ENCODE measurements at regions of chr19 and their contacts with region 1.

Region 1: DNA sequence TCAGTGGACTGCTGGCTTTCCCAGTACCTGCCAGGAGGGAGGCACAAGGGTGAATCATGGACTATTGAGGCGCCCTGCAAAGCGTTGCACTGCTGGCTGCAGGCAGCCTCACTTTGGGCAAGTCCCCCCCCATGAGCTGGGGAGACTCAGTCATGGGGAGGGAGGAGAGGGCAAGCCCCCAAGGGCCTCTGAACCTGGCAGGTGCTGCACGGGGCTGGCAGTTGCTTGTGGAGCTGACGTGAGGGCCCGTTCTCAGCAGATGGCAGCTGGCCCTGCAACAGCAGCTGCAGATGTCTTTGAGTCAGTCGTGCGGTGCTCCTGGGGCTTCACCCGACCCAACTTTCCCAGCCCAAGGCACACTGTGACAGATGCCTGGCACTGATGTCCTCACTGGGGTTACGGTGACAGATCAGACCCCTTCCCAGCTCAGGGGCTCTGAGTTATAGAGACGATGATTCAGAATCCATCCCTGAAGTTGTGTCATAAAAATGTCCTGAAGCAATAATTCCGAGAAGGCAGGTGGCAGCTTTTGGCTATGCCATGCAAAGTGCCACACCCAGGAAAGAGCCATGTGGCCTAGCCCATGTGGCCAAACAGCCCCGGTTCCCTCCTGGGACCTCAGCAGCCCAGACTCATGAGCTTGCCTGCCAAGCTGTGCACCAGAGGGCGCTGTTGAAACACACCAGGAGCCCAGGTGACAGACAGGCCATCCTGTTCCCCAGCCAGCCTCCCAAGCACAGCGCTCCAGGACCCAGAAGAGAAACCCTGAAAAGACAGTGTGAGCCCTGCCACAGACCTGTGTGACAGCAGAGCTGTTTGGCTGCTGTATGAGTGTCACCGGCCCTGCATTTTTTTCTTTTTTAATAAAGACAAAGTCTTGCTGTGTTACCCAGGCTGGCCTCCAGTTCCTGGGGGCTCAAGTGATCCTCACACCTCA is 53.6 kb upstream of the LDLR start:
- DNase-seq: peak; percentile 94
- ATAC-seq: peak; percentile 87
- H3K4me3 ChIP-seq: no peak overlapping the region
- H3K4me3 Mint-ChIP-seq: peak overlapping the region; percentile 44
- H3K27ac ChIP-seq: no peak overlapping the region
- H3K27ac Mint-ChIP-seq: peak overlapping the region; percentile 88
- H3K4me1 ChIP-seq: peaks cover 11 to 26% of the 10 kb centered on the region in 2 donors
- H3K4me1 Mint-ChIP-seq: peaks cover 18% of the 10 kb centered on the region
- H3K27me3 ChIP-seq: peaks cover 0 to 14% (median 1%) of the 10 kb centered on the region in 4 experiments
- H3K27me3 Mint-ChIP-seq: peaks cover 6% of the 10 kb centered on the region
- CTCF ChIP-seq: peak; percentile 93

Region 2: DNA sequence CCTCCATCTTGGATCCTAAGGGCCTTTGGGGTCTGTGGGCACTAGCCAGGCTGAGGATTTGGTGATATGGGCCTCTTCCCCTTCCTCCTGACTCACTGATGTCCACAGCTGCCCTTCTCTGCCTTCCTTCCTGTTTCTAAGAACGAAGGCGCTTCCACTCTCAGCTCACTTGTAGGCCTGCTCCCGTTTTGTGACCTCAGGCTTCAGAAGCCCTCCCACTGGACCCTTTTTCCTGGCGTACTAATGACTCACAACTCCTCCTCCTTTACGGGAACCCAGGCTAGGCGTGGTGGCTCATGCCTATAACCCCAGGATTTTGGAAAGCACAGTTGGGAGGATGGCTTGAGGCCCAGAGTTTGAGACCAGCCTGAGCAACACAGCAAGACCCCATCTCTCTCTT is 255.3 kb before region 1 on chr19:
- CTCF ChIA-PET with region 1: no interaction called
- POLR2A ChIA-PET with region 1: no interaction called
- intact Hi-C with region 1: no loop called
- DNase-seq: no peak
- ATAC-seq: no peak
- H3K4me3 ChIP-seq: no peak overlapping the region
- H3K4me3 Mint-ChIP-seq: no peak overlapping the region
- H3K27ac ChIP-seq: peak overlapping the region in 1 of 2 donors; percentile 60
- H3K27ac Mint-ChIP-seq: peak overlapping the region; percentile 86
- H3K4me1 ChIP-seq: peaks cover 42 to 67% of the 10 kb centered on the region in 2 donors
- H3K4me1 Mint-ChIP-seq: peaks cover 54% of the 10 kb centered on the region
- H3K27me3 ChIP-seq: no peaks in the 10 kb centered on the region
- H3K27me3 Mint-ChIP-seq: no peaks in the 10 kb centered on the region
- CTCF ChIP-seq: no peak

Region 3: GRCh38 chr19:10936661-10937084 is 99.0 kb before region 1 on chr19:
- CTCF ChIA-PET with region 1: interaction called, 12 read pairs
- POLR2A ChIA-PET with region 1: interaction called, 8 read pairs
- intact Hi-C with region 1: no loop called
- DNase-seq: peak; percentile 73
- ATAC-seq: peak; percentile 60
- H3K4me3 ChIP-seq: no peak overlapping the region
- H3K4me3 Mint-ChIP-seq: peak overlapping the region; percentile 34
- H3K27ac ChIP-seq: no peak overlapping the region
- H3K27ac Mint-ChIP-seq: no peak overlapping the region
- H3K4me1 ChIP-seq: peaks cover 0 to 4% of the 10 kb centered on the region in 2 donors
- H3K4me1 Mint-ChIP-seq: peaks cover 2% of the 10 kb centered on the region
- H3K27me3 ChIP-seq: no peaks in the 10 kb centered on the region
- H3K27me3 Mint-ChIP-seq: no peaks in the 10 kb centered on the region
- CTCF ChIP-seq: peak; percentile 73

Region 4: DNA sequence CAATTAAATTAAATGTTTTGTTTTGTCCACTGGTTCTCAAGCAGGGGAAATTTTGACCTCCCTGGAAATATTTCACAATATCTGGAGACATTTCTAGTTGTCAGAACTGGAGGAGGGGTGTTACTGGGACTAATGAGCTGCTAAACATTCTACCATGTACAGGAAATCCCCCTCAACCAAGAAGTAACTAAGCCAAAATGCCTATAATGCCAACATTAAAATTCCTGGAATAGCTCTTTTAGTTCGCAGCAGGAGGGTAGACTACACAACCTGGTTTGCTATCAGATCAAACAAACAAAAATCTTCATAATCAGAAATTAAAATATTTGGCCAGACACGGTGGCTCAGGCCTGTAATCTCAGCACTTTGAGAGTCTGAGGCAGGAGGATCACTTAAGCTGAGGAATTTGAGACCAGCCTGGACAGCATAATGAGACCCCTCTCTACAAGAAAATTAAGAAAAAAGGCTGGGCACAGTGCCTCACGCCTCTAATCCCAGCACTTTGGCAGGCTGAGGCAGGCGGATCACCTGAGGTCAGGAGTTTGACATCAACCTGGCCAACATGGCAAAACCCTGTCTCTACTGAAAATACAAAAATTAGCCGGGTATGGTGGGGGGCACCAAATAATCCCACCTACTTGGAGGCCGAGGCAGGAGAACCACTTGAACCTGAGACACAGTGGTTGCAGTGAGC is 88.6 kb before region 1 on chr19:
- CTCF ChIA-PET with region 1: interaction called, 12 read pairs
- POLR2A ChIA-PET with region 1: no interaction called
- intact Hi-C with region 1: loop called (anchors 1 kb)
- DNase-seq: no peak
- ATAC-seq: no peak
- H3K4me3 ChIP-seq: no peak overlapping the region
- H3K4me3 Mint-ChIP-seq: no peak overlapping the region
- H3K27ac ChIP-seq: no peak overlapping the region
- H3K27ac Mint-ChIP-seq: no peak overlapping the region
- H3K4me1 ChIP-seq: no peaks in the 10 kb centered on the region
- H3K4me1 Mint-ChIP-seq: peaks cover 3% of the 10 kb centered on the region
- H3K27me3 ChIP-seq: no peaks in the 10 kb centered on the region
- H3K27me3 Mint-ChIP-seq: no peaks in the 10 kb centered on the region
- CTCF ChIP-seq: no peak

Region 5: GRCh38 chr19:11050323-11051114 is 14.8 kb after region 1 on chr19:
- CTCF ChIA-PET with region 1: interaction called, 14 read pairs
- POLR2A ChIA-PET with region 1: interaction called, 7 read pairs
- intact Hi-C with region 1: loop called (anchors 1 kb)
- DNase-seq: no peak
- ATAC-seq: no peak
- H3K4me3 ChIP-seq: no peak overlapping the region
- H3K4me3 Mint-ChIP-seq: peak overlapping the region; percentile 69
- H3K27ac ChIP-seq: no peak overlapping the region
- H3K27ac Mint-ChIP-seq: no peak overlapping the region
- H3K4me1 ChIP-seq: peaks cover 78 to 92% of the 10 kb centered on the region in 2 donors
- H3K4me1 Mint-ChIP-seq: peaks cover 72% of the 10 kb centered on the region
- H3K27me3 ChIP-seq: peaks cover 0 to 29% (median 4%) of the 10 kb centered on the region in 4 experiments
- H3K27me3 Mint-ChIP-seq: peaks cover 17% of the 10 kb centered on the region
- CTCF ChIP-seq: no peak

Region 6: GRCh38 chr19:11137542-11138384 is 102.1 kb after region 1 on chr19:
- CTCF ChIA-PET with region 1: interaction called, 14 read pairs
- POLR2A ChIA-PET with region 1: no interaction called
- intact Hi-C with region 1: no loop called
- DNase-seq: peak; percentile 42
- ATAC-seq: peak; percentile 33
- H3K4me3 ChIP-seq: no peak overlapping the region
- H3K4me3 Mint-ChIP-seq: peak overlapping the region; percentile 49
- H3K27ac ChIP-seq: no peak overlapping the region
- H3K27ac Mint-ChIP-seq: no peak overlapping the region
- H3K4me1 ChIP-seq: peaks cover 7 to 17% of the 10 kb centered on the region in 2 donors
- H3K4me1 Mint-ChIP-seq: peaks cover 12% of the 10 kb centered on the region
- H3K27me3 ChIP-seq: peaks cover 0 to 39% (median 8%) of the 10 kb centered on the region in 4 experiments
- H3K27me3 Mint-ChIP-seq: peaks cover 19% of the 10 kb centered on the region
- CTCF ChIP-seq: peak; percentile 39

Region 7: GRCh38 chr19:11203194-11204075 is 167.7 kb after region 1 on chr19:
- CTCF ChIA-PET with region 1: interaction called, 24 read pairs
- POLR2A ChIA-PET with region 1: no interaction called
- intact Hi-C with region 1: loop called (anchors 1 kb)
- DNase-seq: no peak
- ATAC-seq: peak; percentile 50
- H3K4me3 ChIP-seq: no peak overlapping the region
- H3K4me3 Mint-ChIP-seq: no peak overlapping the region
- H3K27ac ChIP-seq: no peak overlapping the region
- H3K27ac Mint-ChIP-seq: no peak overlapping the region
- H3K4me1 ChIP-seq: peaks cover 0 to 8% of the 10 kb centered on the region in 2 donors
- H3K4me1 Mint-ChIP-seq: peaks cover 11% of the 10 kb centered on the region
- H3K27me3 ChIP-seq: peaks cover 0 to 3% (median 0%) of the 10 kb centered on the region in 4 experiments
- H3K27me3 Mint-ChIP-seq: peaks cover 3% of the 10 kb centered on the region
- CTCF ChIP-seq: peak; percentile 68

Region 8: GRCh38 chr19:11482384-11483050 is 446.8 kb after region 1 on chr19:
- CTCF ChIA-PET with region 1: interaction called, 8 read pairs
- POLR2A ChIA-PET with region 1: no interaction called
- intact Hi-C with region 1: loop called (anchors 5 kb)
- DNase-seq: peak; percentile 93
- ATAC-seq: peak; percentile 79
- H3K4me3 ChIP-seq: peak overlapping the region in 4 of 5 experiments; percentile 20 to 48 (median 30)
- H3K4me3 Mint-ChIP-seq: peak overlapping the region; percentile 80
- H3K27ac ChIP-seq: no peak overlapping the region
- H3K27ac Mint-ChIP-seq: peak overlapping the region; percentile 80
- H3K4me1 ChIP-seq: peaks cover 37 to 42% of the 10 kb centered on the region in 2 donors
- H3K4me1 Mint-ChIP-seq: peaks cover 27% of the 10 kb centered on the region
- H3K27me3 ChIP-seq: peaks cover 0 to 46% (median 25%) of the 10 kb centered on the region in 4 experiments
- H3K27me3 Mint-ChIP-seq: peaks cover 34% of the 10 kb centered on the region
- CTCF ChIP-seq: peak; percentile 93